Activated B cell treated with CpG ODN at 0.5 μM for 24 hours (primary cell): ENCODE measurements at regions of chr9 and their contacts with region 1.

Region 1: DNA sequence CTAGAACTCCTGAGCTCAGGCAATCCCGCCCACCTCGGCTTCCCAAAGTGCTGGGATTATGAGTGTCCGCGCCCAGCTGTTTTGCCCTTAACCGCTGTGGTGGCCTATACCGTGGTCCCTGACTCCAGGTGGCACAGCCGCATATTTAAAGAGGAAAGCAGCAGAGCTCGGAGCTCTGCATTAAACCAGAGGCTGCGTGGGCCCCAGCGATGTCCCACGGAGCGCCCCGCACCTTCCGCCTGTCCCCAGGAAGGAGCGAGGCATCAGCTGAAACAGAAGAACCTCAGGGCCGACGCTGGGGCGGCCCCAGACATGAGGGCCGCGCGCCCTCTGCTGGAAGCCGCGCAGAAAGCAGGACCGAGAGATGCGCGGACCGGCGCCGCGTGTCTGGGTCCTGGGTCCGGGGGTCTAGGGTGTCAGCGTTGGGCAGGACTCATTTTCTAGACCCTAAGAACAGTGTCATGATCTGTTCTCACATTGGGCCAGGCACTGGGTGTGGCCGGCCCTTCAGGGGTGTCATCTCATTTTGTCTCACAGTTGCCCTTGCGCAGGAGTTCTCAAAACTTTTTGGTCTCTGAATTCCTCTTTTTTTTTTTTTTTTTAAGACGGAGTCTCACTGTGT is 37.7 kb downstream of the LAMC3 start:
- DNase-seq: peak; percentile 75
- ATAC-seq: peak; percentile 83
- H3K4me3 Mint-ChIP-seq: no peak overlapping the region
- H3K27ac Mint-ChIP-seq: no peak overlapping the region
- H3K4me1 Mint-ChIP-seq: peaks cover 10% of the 10 kb centered on the region
- H3K27me3 Mint-ChIP-seq: peaks cover 4% of the 10 kb centered on the region
- CTCF ChIP-seq: peak; percentile 40

Region 2: GRCh38 chr9:130461218-130461630 is 585.5 kb before region 1 on chr9:
- CTCF ChIA-PET with region 1: no interaction called
- POLR2A ChIA-PET with region 1: no interaction called
- intact Hi-C with region 1: loop called (anchors 1 kb)
- DNase-seq: peak; percentile 74
- ATAC-seq: peak; percentile 76
- H3K4me3 Mint-ChIP-seq: no peak overlapping the region
- H3K27ac Mint-ChIP-seq: no peak overlapping the region
- H3K4me1 Mint-ChIP-seq: no peaks in the 10 kb centered on the region
- H3K27me3 Mint-ChIP-seq: peaks cover 11% of the 10 kb centered on the region
- CTCF ChIP-seq: peak; percentile 77

Region 3: DNA sequence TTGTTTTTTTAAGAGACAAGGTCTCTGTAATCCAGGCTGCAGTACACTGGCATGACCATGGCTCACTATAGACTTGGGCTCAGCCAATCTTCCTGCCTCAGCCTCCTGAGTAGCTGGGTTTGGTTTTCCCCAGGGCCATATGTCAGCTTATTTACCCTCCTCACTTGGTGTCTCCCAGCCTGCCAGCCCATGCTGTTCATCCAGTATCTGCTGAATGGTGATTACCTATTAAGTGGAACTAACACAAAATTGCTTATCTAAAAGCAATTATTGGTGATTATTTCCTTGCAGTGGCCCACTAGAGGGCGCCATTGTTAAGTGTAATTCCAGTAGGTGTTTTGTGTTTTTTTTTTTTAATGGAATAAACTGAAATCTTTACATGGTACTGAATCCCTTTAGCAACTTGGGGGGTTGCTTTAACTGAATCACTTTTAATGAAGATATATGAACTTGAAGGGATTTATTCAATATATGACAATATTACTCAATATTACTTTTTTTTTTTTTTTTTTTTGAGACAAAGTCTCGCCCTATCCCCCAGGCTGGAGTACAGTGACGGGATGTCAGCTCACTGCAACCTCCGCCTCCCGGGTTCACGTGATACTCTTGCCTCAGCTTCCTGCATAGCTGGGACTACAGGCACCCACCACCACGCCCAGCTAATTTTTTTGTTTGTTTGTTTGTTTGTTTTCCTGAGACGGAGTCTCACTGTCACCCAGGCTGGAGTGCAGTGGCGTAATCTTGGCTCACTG is 339.3 kb before region 1 on chr9:
- CTCF ChIA-PET with region 1: interaction called, 15 read pairs
- POLR2A ChIA-PET with region 1: interaction called, 6 read pairs
- intact Hi-C with region 1: loop called (anchors 1 kb)
- DNase-seq: no peak
- ATAC-seq: peak; percentile 18
- H3K4me3 Mint-ChIP-seq: no peak overlapping the region
- H3K27ac Mint-ChIP-seq: no peak overlapping the region
- H3K4me1 Mint-ChIP-seq: peaks cover 2% of the 10 kb centered on the region
- H3K27me3 Mint-ChIP-seq: no peaks in the 10 kb centered on the region
- CTCF ChIP-seq: peak; percentile 27

Region 4: DNA sequence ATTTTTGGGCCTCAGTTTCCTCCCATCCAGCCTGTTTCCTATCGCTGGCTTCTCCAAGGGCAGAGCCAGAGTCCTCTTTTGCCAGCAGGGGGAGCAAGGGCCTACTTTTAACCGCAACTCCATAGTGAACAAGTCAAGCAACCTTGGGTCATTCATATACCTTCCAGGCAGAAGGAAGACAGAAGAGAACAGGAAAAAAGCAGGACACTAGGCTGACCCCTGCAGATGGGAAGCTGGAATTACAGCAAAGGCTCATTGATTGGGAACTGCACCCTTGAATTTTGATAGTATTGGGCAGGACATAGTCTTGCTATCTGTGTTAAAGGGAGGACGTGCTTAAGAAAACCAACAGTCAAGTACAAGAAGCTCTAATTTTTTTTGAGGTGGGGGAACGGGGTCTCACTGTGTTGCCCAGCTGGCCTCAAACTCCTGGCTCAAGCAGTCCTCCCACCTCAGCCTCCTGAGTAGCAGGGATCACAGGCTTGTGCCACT is 180.2 kb before region 1 on chr9:
- CTCF ChIA-PET with region 1: interaction called, 161 read pairs
- POLR2A ChIA-PET with region 1: interaction called, 6 read pairs
- intact Hi-C with region 1: loop called (anchors 1 kb)
- DNase-seq: peak; percentile 33
- ATAC-seq: peak; percentile 56
- H3K4me3 Mint-ChIP-seq: no peak overlapping the region
- H3K27ac Mint-ChIP-seq: no peak overlapping the region
- H3K4me1 Mint-ChIP-seq: peaks cover 18% of the 10 kb centered on the region
- H3K27me3 Mint-ChIP-seq: no peaks in the 10 kb centered on the region
- CTCF ChIP-seq: no peak

Region 5: GRCh38 chr9:131008909-131009618 is 37.6 kb before region 1 on chr9 and contains the start of gene LAMC3:
- CTCF ChIA-PET with region 1: interaction called, 9 read pairs
- POLR2A ChIA-PET with region 1: interaction called, 6 read pairs
- intact Hi-C with region 1: loop called (anchors 2 kb)
- DNase-seq: no peak
- ATAC-seq: peak; percentile 45
- H3K4me3 Mint-ChIP-seq: peak within 1 kb of the TSS; percentile 52
- H3K27ac Mint-ChIP-seq: no peak within 1 kb of the TSS
- H3K4me1 Mint-ChIP-seq: peaks cover 5% of the 10 kb centered on the region
- H3K27me3 Mint-ChIP-seq: peaks cover 34% of the 10 kb centered on the region
- CTCF ChIP-seq: no peak
- total RNA-seq, gene LAMC3: not detected in 2 replicates

Region 6: GRCh38 chr9:131478421-131478868 is 431.8 kb after region 1 on chr9:
- CTCF ChIA-PET with region 1: no interaction called
- POLR2A ChIA-PET with region 1: no interaction called
- intact Hi-C with region 1: no loop called
- DNase-seq: peak; percentile 56
- ATAC-seq: peak; percentile 57
- H3K4me3 Mint-ChIP-seq: no peak overlapping the region
- H3K27ac Mint-ChIP-seq: peak overlapping the region; percentile 18
- H3K4me1 Mint-ChIP-seq: no peaks in the 10 kb centered on the region
- H3K27me3 Mint-ChIP-seq: no peaks in the 10 kb centered on the region
- CTCF ChIP-seq: no peak